Activated naive CD4-positive, alpha-beta T cell treated with anti-CD3 and anti-CD28 coated beads for 36 hours (primary cell): ENCODE measurements at regions of chr6 and their contacts with region 1.

Region 1: DNA sequence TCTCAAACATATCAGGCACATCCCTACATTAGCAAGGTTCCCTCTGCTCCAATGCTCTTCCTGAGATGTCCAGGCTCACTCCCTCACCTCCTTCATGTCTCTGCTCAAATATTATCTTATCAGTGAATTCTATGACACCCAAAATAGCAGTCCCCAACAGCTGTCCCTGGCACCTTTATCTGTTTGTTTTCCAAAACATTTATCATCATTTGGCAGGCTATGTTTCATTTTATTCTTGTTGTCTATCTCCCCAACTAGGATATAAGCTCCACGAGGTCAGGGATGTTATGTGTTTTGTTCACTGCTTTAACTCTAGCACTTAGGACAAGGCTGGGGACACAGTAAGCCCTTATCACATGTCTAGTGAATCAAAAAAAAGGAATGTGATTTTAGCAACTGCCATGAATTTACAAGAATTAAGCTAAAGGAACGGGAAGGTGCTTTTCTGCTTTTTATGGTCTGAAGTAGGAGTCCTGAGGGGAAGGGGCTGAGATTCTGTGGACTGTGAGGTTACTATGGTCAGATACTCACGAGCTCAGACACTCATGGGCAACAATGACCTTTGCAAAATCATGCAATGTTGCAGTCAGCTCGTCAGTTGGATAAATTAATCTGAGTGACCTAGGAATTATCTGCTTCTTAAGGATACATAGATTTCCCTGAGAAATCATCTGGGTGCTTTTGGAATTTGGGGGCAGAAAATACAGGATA is 1.9 kb upstream of the IL22RA2 start:
- DNase-seq: no peak
- H3K4me3 Mint-ChIP-seq: no peak overlapping the region
- H3K27ac Mint-ChIP-seq: no peak overlapping the region
- H3K4me1 Mint-ChIP-seq: peaks cover 9% of the 10 kb centered on the region
- H3K27me3 Mint-ChIP-seq: peaks cover 7% of the 10 kb centered on the region

Region 2: GRCh38 chr6:137136065-137136464 is 39.2 kb before region 1 on chr6:
- CTCF ChIA-PET with region 1: no interaction called
- intact Hi-C with region 1: no loop called
- DNase-seq: no peak
- H3K4me3 Mint-ChIP-seq: no peak overlapping the region
- H3K27ac Mint-ChIP-seq: no peak overlapping the region
- H3K4me1 Mint-ChIP-seq: no peaks in the 10 kb centered on the region
- H3K27me3 Mint-ChIP-seq: peaks cover 5% of the 10 kb centered on the region

Region 3: DNA sequence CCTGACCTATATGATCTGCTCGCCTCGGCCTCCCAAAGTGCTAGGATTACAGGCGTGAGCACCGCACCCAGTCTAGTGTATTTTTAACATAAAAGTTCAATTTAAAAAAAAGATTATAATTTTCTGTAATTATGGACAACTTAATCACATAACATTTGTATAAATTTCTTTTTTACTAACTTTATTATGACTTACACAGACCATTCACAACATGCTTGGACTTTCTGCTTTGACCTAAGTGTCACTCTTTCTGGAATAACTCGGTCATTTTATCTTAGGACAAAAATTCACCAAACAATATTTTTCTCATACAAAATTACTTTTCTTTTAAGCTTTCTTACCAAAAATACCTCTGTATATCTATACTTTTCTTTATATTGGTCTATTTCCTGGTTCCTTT is 13.5 kb after region 1 on chr6:
- CTCF ChIA-PET with region 1: no interaction called
- intact Hi-C with region 1: loop called (anchors 2 kb)
- DNase-seq: peak; percentile 19
- H3K4me3 Mint-ChIP-seq: no peak overlapping the region
- H3K27ac Mint-ChIP-seq: no peak overlapping the region
- H3K4me1 Mint-ChIP-seq: no peaks in the 10 kb centered on the region
- H3K27me3 Mint-ChIP-seq: no peaks in the 10 kb centered on the region

Region 4: GRCh38 chr6:138869398-138869797 is 1694.1 kb after region 1 on chr6:
- CTCF ChIA-PET with region 1: no interaction called
- intact Hi-C with region 1: no loop called
- DNase-seq: no peak
- H3K4me3 Mint-ChIP-seq: no peak overlapping the region
- H3K27ac Mint-ChIP-seq: no peak overlapping the region
- H3K4me1 Mint-ChIP-seq: peaks cover 14% of the 10 kb centered on the region
- H3K27me3 Mint-ChIP-seq: peaks cover 2% of the 10 kb centered on the region